OCI-LY7 (cell line): ENCODE measurements at regions of chr7 and their contacts with region 1.

Region 1: DNA sequence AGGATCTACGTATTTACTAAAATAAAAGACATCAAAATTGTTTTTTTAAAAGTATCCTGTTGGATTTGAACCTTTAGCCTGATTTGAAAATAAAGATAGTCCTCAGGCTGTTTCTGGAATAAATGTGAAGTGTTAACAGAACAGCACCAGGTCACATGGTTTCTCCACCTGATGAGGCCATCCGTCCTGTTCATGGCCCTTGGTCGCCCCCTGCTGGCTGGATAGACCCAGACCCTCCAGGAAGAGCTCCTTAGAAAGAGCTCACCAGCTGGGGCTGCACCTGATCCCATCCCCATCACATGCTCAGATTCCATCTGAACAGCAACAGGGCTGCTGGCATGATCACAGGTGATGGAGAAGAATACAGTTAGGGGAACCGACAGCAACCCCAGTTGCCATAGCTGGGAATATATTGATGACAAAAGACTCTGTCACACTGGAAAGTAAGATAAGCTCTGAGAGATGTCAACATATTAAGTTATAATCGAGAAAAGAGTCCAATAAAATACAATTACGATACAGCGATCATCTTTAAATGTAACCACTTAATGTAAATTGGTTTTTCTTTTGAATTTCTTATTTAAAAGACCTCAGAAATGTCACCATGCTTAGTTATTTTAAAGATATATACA is 4.8 kb downstream of the OR2A14 start:
- DNase-seq: peak; percentile 74
- H3K4me3 ChIP-seq: no peak overlapping the region
- H3K27ac ChIP-seq: no peak overlapping the region
- H3K4me1 ChIP-seq: no peaks in the 10 kb centered on the region
- CTCF ChIP-seq: peak; percentile 92

Region 2: GRCh38 chr7:143936087-143937009 is 191.5 kb before region 1 on chr7:
- CTCF ChIA-PET with region 1: no interaction called
- POLR2A ChIA-PET with region 1: no interaction called
- intact Hi-C with region 1: loop called (anchors 10 kb)
- DNase-seq: no peak
- H3K4me3 ChIP-seq: no peak overlapping the region
- H3K27ac ChIP-seq: no peak overlapping the region
- H3K4me1 ChIP-seq: no peaks in the 10 kb centered on the region
- CTCF ChIP-seq: no peak

Region 3: DNA sequence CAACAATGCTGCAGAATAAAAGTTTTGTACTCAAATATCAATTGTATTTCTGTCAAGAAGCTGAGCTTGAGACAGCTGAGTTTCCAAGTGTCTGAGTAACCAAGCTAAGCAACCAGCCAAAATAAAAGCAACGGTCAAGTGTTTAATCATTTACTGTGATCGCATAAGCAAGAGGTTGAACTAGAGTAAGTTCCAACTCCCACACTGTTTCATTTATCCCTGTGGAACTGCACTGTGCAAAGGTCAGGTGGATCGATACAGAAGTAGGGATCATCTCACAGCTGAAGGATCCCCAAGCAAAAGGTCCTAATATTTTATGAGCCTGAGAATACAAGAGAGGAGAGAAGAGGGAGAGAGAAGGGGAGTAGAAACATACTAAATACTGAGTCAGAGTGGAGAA is 16.6 kb after region 1 on chr7:
- CTCF ChIA-PET with region 1: no interaction called
- POLR2A ChIA-PET with region 1: no interaction called
- intact Hi-C with region 1: no loop called
- DNase-seq: no peak
- H3K4me3 ChIP-seq: no peak overlapping the region
- H3K27ac ChIP-seq: no peak overlapping the region
- H3K4me1 ChIP-seq: no peaks in the 10 kb centered on the region
- CTCF ChIP-seq: no peak